Heart right ventricle (tissue), 16 donors: ENCODE measurements at regions of chrX and their contacts with region 1.

Region 1: GRCh38 chrX:154855256-154855655 is 20.8 kb upstream of the SMIM9 start:
- DNase-seq: no peak
- ATAC-seq: no peak
- H3K4me3 ChIP-seq: no peak overlapping the region
- H3K27ac ChIP-seq: no peak overlapping the region
- H3K4me1 ChIP-seq: no peaks in the 10 kb centered on the region
- H3K27me3 ChIP-seq: no peaks in the 10 kb centered on the region
- CTCF ChIP-seq: no peak

Region 2: DNA sequence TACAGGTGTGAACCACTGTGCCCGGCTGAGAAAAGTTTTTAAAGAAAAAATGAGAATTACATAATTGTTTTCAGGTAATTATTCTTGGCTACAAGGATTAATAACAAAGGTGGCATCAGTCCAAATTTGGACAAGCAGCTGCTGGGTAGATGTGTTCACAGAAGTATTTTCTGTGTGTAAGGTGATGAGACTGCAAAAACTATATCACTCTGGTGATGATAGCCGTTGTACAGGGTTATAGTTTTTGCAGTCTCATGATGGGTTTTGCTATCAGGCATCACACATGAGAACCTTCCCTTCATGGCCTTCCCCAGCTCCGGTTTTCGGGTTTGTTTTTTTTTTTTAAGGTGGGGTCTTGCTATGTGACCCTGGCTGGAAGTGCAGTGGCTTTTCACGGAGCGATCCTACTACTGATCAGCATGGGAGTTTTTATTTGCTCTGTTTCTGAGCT is 359.8 kb before region 1 on chrX:
- intact Hi-C with region 1: no loop called
- DNase-seq: no peak
- ATAC-seq: no peak
- H3K4me3 ChIP-seq: no peak overlapping the region
- H3K27ac ChIP-seq: no peak overlapping the region
- H3K4me1 ChIP-seq: peaks cover 0 to 3% (median 0%) of the 10 kb centered on the region in 9 donors
- H3K27me3 ChIP-seq: peaks cover 0 to 4% (median 0%) of the 10 kb centered on the region in 7 donors
- CTCF ChIP-seq: no peak

Region 3: GRCh38 chrX:154908821-154909220 is 53.6 kb after region 1 on chrX:
- intact Hi-C with region 1: loop called in 1 of 10 experiments (anchors 10 kb)
- DNase-seq: no peak
- ATAC-seq: no peak
- H3K4me3 ChIP-seq: no peak overlapping the region
- H3K27ac ChIP-seq: no peak overlapping the region
- H3K4me1 ChIP-seq: no peaks in the 10 kb centered on the region
- H3K27me3 ChIP-seq: no peaks in the 10 kb centered on the region
- CTCF ChIP-seq: no peak

Region 4: DNA sequence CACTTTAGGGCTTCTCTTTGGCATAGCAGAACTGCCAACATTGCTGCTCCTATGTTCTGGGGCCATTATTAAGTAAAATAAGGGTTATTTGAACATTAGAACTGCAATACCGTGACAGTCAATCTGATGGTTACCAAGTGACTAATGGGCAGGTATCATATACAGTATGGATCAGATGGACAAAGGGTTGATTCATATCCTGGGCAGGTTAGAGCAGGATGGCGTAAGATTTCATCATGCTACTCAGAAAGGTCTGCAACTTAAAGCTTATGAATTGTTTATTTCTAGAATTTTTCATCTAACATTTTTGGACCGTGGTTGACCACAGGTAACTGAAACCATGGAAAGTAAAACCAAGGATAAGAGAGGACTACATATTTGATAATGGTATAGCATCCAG is 256.9 kb after region 1 on chrX:
- intact Hi-C with region 1: no loop called
- DNase-seq: no peak
- ATAC-seq: no peak
- H3K4me3 ChIP-seq: no peak overlapping the region
- H3K27ac ChIP-seq: no peak overlapping the region
- H3K4me1 ChIP-seq: no peaks in the 10 kb centered on the region
- H3K27me3 ChIP-seq: no peaks in the 10 kb centered on the region
- CTCF ChIP-seq: no peak